B cell (primary cell): ENCODE measurements at regions of chr16 and their contacts with region 1.

Region 1: DNA sequence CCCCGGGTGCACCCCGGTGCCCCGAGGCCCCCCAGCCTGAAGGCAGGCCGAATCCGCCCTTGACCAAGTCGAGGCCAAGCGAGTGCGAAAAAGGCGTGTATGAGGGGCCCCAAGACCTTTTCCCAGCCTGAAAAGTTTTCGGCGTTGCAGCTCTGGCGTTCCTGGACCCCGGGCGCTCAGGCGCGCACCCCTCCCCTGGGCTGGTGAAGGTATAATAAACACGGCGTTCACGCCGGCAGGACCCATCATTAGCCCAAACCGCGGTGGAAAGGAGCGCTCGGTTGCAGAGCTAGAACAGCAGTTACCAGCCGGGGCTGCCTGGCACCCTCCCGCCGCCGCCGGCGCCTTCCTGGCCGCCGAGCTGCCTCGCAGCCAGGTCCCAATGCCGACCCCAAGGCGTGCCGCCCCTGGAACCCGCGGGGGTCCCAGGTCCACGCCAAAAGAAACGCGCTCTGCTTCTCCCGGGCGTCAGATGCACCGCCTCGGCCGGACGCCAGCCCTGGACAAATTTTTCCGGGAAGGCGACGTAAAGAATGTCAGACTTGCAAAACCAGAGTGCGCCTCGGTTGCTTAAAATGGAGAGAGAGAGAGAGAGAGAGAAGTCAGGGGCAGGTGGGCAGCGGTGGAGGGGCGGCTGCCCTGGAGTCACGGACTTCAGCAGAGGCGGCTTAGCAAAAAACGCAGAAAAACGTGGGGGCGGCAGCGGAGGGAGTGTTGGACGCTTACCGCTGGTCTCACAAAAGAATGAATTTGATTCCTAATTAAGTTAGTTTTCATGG is 11.5 kb upstream of the FOXF1 start:
- DNase-seq: no peak
- ATAC-seq: no peak
- H3K4me3 ChIP-seq: no peak overlapping the region
- H3K4me3 Mint-ChIP-seq: no peak overlapping the region
- H3K27ac ChIP-seq: no peak overlapping the region
- H3K27ac Mint-ChIP-seq: no peak overlapping the region
- H3K4me1 ChIP-seq: peaks cover 0 to 17% of the 10 kb centered on the region in 2 donors
- H3K4me1 Mint-ChIP-seq: no peaks in the 10 kb centered on the region
- H3K27me3 ChIP-seq: peaks cover 0 to 92% (median 59%) of the 10 kb centered on the region in 4 experiments
- H3K27me3 Mint-ChIP-seq: peaks cover 60% of the 10 kb centered on the region
- CTCF ChIP-seq: no peak

Region 2: DNA sequence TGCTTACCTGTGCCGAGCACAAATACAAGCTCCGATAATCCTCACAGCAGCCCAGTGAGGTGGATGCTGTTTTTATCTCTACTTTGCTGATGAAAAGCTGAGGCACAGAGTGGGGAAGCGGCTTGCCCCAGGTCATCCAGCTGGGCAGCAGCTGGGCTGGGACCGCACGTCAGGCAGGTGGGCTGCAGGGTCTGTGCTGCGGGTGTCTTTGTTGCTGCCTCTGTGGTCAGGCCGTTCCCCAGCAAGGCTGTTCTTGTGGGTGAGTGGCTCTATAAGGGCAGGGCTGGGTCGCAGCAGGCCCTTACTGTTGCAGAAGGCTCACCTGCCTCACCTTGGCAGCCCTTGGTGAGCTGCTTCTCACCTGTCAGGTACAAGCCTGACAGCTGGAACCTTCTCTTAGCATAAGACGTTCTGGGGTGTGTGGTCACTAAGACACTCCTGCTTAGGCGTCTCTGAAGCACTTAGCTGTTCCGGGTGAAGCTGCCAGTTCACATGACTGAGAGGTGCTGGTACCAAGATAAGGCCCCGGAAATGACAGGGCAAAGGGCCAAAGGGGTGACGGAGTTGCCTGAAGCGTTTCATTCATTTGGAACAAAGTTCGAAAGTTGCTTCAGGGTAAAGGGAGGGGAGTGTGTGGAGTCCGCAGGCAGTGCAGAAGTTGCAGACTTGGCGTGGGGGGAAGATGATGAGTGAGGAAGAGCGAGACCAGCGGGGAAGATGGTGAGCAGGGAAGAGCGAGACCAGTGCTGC is 582.5 kb before region 1 on chr16:
- CTCF ChIA-PET with region 1: no interaction called
- POLR2A ChIA-PET with region 1: no interaction called
- intact Hi-C with region 1: loop called (anchors 5 kb)
- DNase-seq: no peak
- ATAC-seq: peak; percentile 32
- H3K4me3 ChIP-seq: no peak overlapping the region
- H3K4me3 Mint-ChIP-seq: peak overlapping the region; percentile 75
- H3K27ac ChIP-seq: peak overlapping the region; percentile 3 to 59
- H3K27ac Mint-ChIP-seq: peak overlapping the region; percentile 82
- H3K4me1 ChIP-seq: peaks cover 76 to 81% of the 10 kb centered on the region in 2 donors
- H3K4me1 Mint-ChIP-seq: peaks cover 77% of the 10 kb centered on the region
- H3K27me3 ChIP-seq: no peaks in the 10 kb centered on the region
- H3K27me3 Mint-ChIP-seq: no peaks in the 10 kb centered on the region
- CTCF ChIP-seq: no peak

Region 3: DNA sequence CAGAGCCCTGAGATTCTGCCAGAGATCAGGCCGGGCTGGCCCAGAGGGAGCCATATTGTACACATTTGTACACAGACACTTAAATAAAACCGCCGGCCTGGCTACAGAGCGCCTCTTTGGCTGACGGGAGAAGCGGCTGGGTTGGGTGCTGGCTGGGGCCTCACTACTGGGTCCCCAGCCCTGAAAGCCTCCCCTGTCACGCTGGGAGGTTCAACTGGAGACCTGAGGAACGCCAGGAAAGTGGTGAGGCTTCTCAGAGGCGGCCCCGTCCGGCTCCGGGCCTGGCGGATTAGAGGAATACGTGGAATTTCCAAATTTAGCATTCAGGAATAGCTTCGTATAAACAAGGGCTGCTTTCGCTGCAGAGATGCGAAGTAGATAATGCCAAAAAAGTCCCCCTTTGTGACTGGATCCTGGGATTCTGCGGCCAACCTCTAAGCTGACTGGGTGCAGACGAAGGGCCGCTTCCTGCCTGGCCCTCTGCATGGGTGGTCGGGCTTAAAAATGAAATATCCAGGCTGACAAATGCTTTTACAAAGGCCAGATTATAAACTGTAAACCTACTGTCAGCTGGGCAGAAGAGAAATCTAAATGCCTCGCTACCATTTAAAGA is 347.5 kb before region 1 on chr16:
- CTCF ChIA-PET with region 1: no interaction called
- POLR2A ChIA-PET with region 1: no interaction called
- intact Hi-C with region 1: no loop called
- DNase-seq: no peak
- ATAC-seq: no peak
- H3K4me3 ChIP-seq: no peak overlapping the region
- H3K4me3 Mint-ChIP-seq: no peak overlapping the region
- H3K27ac ChIP-seq: no peak overlapping the region
- H3K27ac Mint-ChIP-seq: no peak overlapping the region
- H3K4me1 ChIP-seq: no peaks in the 10 kb centered on the region
- H3K4me1 Mint-ChIP-seq: no peaks in the 10 kb centered on the region
- H3K27me3 ChIP-seq: peaks cover 0 to 4% (median under 1%) of the 10 kb centered on the region in 4 experiments
- H3K27me3 Mint-ChIP-seq: peaks cover 38% of the 10 kb centered on the region
- CTCF ChIP-seq: no peak

Region 4: DNA sequence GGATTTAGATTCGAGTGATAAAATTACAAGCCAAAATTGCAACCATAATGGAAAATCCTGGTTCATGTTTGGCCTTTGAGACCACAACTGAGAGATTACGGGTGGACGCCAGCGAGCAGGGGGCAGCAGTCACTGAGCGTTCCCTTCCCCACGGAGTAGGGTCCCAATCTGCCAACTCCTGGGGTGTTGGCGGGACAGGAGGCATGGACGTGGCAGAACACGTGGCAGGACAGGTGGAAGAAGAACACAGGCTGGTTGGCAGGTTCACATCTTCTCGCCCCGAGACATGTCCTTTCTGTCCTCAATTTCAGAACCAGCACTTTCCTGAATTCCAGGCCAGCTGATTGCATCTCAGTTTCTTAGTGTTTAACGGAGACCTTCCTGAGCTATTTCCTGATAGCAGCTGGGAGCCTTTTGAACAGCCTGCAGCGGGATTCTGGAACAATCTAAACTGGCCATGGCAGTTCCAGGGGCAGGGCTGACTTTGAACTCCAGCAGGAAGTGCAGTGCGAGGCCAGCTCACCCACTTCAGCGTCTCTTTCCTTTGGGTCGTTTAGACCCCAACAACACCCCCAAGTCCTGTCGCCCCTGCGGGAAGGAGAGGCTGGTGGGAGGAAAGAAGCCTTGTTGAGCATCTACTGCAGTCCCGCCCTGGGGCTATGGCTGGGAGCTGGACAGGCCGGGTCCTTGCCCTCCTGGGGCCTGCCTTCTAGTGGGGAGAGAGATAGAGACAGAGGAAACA is 147.6 kb before region 1 on chr16:
- CTCF ChIA-PET with region 1: no interaction called
- POLR2A ChIA-PET with region 1: interaction called, 15 read pairs
- intact Hi-C with region 1: no loop called
- DNase-seq: no peak
- ATAC-seq: no peak
- H3K4me3 ChIP-seq: no peak overlapping the region
- H3K4me3 Mint-ChIP-seq: no peak overlapping the region
- H3K27ac ChIP-seq: no peak overlapping the region
- H3K27ac Mint-ChIP-seq: no peak overlapping the region
- H3K4me1 ChIP-seq: no peaks in the 10 kb centered on the region
- H3K4me1 Mint-ChIP-seq: no peaks in the 10 kb centered on the region
- H3K27me3 ChIP-seq: peaks cover 0 to 17% (median 0%) of the 10 kb centered on the region in 4 experiments
- H3K27me3 Mint-ChIP-seq: peaks cover 48% of the 10 kb centered on the region
- CTCF ChIP-seq: no peak

Region 5: GRCh38 chr16:86519649-86520316 is 20.9 kb after region 1 on chr16:
- CTCF ChIA-PET with region 1: no interaction called
- POLR2A ChIA-PET with region 1: no interaction called
- intact Hi-C with region 1: no loop called
- DNase-seq: peak; percentile 81
- ATAC-seq: no peak
- H3K4me3 ChIP-seq: no peak overlapping the region
- H3K4me3 Mint-ChIP-seq: no peak overlapping the region
- H3K27ac ChIP-seq: no peak overlapping the region
- H3K27ac Mint-ChIP-seq: no peak overlapping the region
- H3K4me1 ChIP-seq: peaks cover 7 to 14% of the 10 kb centered on the region in 2 donors
- H3K4me1 Mint-ChIP-seq: peaks cover 8% of the 10 kb centered on the region
- H3K27me3 ChIP-seq: peaks cover 0 to 75% (median 35%) of the 10 kb centered on the region in 4 experiments
- H3K27me3 Mint-ChIP-seq: peaks cover 51% of the 10 kb centered on the region
- CTCF ChIP-seq: peak; percentile 99

Region 6: GRCh38 chr16:86554917-86555703 is 56.3 kb after region 1 on chr16 and contains the start of gene MTHFSD:
- CTCF ChIA-PET with region 1: no interaction called
- POLR2A ChIA-PET with region 1: no interaction called
- intact Hi-C with region 1: no loop called
- DNase-seq: peak; percentile 95
- ATAC-seq: peak; percentile 97
- H3K4me3 ChIP-seq: peak within 1 kb of the TSS; percentile 78 to 98 (median 87)
- H3K4me3 Mint-ChIP-seq: peak within 1 kb of the TSS; percentile 95
- H3K27ac ChIP-seq: peak within 1 kb of the TSS; percentile 89 to 94
- H3K27ac Mint-ChIP-seq: peak within 1 kb of the TSS; percentile 95
- H3K4me1 ChIP-seq: peaks cover 6 to 16% of the 10 kb centered on the region in 2 donors
- H3K4me1 Mint-ChIP-seq: peaks cover 16% of the 10 kb centered on the region
- H3K27me3 ChIP-seq: peaks cover 0 to 7% (median 1%) of the 10 kb centered on the region in 4 experiments
- H3K27me3 Mint-ChIP-seq: peaks cover 3% of the 10 kb centered on the region
- CTCF ChIP-seq: no peak
- total RNA-seq, gene MTHFSD: 42.0 and 51.7 TPM in 2 replicates